Esophagus muscularis mucosa (tissue), 4 donors: ENCODE measurements at regions of chr14 and their contacts with region 1.

Region 1: GRCh38 chr14:23631702-23632460 is 4.3 kb upstream of the DHRS2 start:
- DNase-seq: no peak
- H3K4me3 ChIP-seq: peak overlapping the region in 2 of 4 donors; percentile 13 to 42
- H3K27ac ChIP-seq: peak overlapping the region in 1 of 4 donors; percentile 12
- H3K4me1 ChIP-seq: peaks cover 4 to 14% (median 10%) of the 10 kb centered on the region in 4 donors
- H3K27me3 ChIP-seq: no peaks in the 10 kb centered on the region
- CTCF ChIP-seq: peak; percentile 84 to 94 (median 87)
- EP300 ChIP-seq: no peak
- POLR2A ChIP-seq: no peak

Region 2: DNA sequence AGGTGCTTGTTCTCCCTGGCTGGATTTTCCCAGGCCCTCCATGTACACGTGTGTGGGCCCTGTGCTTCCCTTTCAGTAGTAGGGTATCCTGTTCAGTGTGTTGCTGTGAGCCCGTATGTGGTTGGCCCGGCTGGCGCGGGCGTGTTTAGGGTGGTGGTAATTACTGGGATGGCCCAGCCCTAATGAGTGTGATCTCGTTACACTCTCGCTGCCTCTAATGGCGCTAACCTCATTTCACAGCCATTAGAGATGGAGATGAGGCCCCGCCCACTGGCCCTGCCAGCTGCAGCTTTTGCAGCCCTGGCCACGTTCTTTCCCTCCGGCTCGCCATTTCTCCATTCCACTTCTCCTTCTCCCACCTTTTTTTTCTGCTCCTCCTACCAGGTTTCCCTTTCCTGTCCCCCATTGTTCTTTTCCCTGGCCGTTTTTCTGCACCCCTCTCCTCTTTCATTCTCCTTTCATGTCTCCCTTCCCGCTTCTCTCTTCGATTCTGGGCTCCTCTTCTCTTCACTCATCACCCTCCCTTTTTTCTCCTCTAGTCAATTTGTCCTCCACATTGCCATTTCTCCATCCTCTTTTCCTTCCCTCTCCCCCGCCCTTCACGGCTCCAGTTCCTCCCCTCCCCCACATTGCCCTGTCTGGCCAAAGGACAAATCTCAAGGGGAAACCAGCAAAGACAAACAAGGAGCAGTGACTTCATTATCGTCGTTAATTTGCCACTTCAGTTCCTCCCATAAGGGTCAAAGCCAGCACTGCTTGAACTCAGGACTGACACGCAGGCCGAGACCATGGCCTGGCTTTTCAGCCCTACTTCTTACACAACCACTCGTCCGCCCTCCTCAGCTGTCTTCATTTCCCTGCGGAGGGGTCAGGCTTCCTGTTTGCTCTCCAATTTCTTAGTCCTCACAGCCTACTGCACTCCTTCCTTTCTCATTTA is 87.1 kb before region 1 on chr14:
- intact Hi-C with region 1: no loop called
- DNase-seq: no peak
- H3K4me3 ChIP-seq: no peak overlapping the region
- H3K27ac ChIP-seq: peak overlapping the region in 1 of 4 donors; percentile 14
- H3K4me1 ChIP-seq: peaks cover 6 to 13% (median 10%) of the 10 kb centered on the region in 4 donors
- H3K27me3 ChIP-seq: no peaks in the 10 kb centered on the region
- CTCF ChIP-seq: no peak
- EP300 ChIP-seq: no peak
- POLR2A ChIP-seq: no peak

Region 3: DNA sequence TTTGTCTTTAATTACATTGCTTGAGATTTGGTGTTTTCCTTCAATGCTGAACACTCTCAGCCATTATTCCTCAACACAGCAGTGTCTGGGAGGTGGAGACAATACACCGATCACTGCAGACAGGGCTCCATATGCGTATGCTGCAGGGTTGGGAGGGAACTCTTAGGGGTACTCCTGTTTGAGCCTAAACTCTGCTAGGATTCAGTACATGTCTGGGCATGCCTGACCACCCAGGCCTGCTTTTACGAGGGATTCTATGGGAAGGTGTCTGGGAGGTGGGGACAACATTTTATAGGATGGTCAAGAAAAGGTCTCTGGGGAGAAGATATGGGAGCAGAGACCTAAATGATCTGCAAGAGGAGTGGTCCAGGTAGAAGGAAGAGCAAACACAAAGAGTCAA is 38.6 kb after region 1 on chr14:
- intact Hi-C with region 1: no loop called
- DNase-seq: no peak
- H3K4me3 ChIP-seq: no peak overlapping the region
- H3K27ac ChIP-seq: no peak overlapping the region
- H3K4me1 ChIP-seq: no peaks in the 10 kb centered on the region
- H3K27me3 ChIP-seq: peaks cover 0 to 4% (median 0%) of the 10 kb centered on the region in 4 donors
- CTCF ChIP-seq: no peak
- EP300 ChIP-seq: no peak
- POLR2A ChIP-seq: no peak

Region 4: GRCh38 chr14:23910101-23910875 is 278.4 kb after region 1 on chr14:
- intact Hi-C with region 1: loop called (anchors 1 kb)
- DNase-seq: no peak
- H3K4me3 ChIP-seq: no peak overlapping the region
- H3K27ac ChIP-seq: no peak overlapping the region
- H3K4me1 ChIP-seq: peaks cover 0 to under 1% (median 0%) of the 10 kb centered on the region in 4 donors
- H3K27me3 ChIP-seq: no peaks in the 10 kb centered on the region
- CTCF ChIP-seq: peak; percentile 56 to 86 (median 61)
- EP300 ChIP-seq: no peak
- POLR2A ChIP-seq: no peak

Region 5: GRCh38 chr14:23929822-23930294 is 298.0 kb after region 1 on chr14:
- intact Hi-C with region 1: loop called (anchors 5 kb)
- DNase-seq: peak; percentile 95
- H3K4me3 ChIP-seq: no peak overlapping the region
- H3K27ac ChIP-seq: no peak overlapping the region
- H3K4me1 ChIP-seq: peaks cover 0 to 19% (median 15%) of the 10 kb centered on the region in 4 donors
- H3K27me3 ChIP-seq: no peaks in the 10 kb centered on the region
- CTCF ChIP-seq: peak; percentile 64 to 91 (median 90)
- EP300 ChIP-seq: no peak
- POLR2A ChIP-seq: no peak